ENCODE measurements at regions of chr2 and their contacts with region 1.

Region 1: DNA sequence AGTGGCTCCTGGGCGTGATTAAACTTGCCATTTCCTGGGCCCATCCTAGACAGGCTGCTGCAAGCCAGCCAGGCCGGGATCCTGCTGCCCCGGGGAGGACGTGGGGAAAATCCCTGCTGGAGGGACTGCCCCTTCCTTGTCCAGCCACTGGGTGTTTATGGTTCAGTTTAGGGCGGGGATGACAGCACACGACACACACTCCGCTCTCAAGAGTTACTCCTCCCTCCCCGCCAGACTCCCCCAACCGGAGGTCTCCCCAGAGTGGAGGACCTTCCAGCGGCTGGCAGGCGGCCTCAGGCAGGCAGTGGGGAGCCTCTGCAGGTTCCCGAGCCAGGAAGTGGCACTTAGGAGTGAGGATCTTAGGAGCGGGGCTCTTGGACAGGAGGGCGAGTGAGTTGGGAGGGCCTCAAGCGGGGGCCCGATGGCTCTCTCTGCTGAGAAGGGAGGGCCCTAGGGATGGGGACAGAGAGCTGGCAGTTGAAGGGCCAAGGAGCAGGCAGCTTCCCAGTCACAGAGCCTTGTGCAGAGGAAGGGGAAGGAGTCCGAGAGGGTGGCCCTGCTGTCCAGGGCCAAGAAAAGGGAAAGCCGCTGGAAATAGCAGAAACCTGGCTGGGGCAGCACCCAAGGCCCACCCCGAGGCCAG is 5.7 kb upstream of the GPR35 start:
- DNase-seq: peak in 1 of 9 donors; percentile 3
- ATAC-seq: no peak
- H3K4me3 ChIP-seq: no peak overlapping the region
- H3K4me3 Mint-ChIP-seq: peak overlapping the region in 3 of 10 donors; percentile 21 to 48 (median 30)
- H3K27ac ChIP-seq: no peak overlapping the region
- H3K27ac Mint-ChIP-seq: peak overlapping the region in 7 of 9 donors; percentile 32 to 82 (median 66)
- H3K4me1 ChIP-seq: peaks cover 38 to 39% of the 10 kb centered on the region in 2 donors
- H3K4me1 Mint-ChIP-seq: peaks cover 11 to 56% (median 40%) of the 10 kb centered on the region in 7 donors
- H3K27me3 ChIP-seq: no peaks in the 10 kb centered on the region
- H3K27me3 Mint-ChIP-seq: no peaks in the 10 kb centered on the region

Region 2: DNA sequence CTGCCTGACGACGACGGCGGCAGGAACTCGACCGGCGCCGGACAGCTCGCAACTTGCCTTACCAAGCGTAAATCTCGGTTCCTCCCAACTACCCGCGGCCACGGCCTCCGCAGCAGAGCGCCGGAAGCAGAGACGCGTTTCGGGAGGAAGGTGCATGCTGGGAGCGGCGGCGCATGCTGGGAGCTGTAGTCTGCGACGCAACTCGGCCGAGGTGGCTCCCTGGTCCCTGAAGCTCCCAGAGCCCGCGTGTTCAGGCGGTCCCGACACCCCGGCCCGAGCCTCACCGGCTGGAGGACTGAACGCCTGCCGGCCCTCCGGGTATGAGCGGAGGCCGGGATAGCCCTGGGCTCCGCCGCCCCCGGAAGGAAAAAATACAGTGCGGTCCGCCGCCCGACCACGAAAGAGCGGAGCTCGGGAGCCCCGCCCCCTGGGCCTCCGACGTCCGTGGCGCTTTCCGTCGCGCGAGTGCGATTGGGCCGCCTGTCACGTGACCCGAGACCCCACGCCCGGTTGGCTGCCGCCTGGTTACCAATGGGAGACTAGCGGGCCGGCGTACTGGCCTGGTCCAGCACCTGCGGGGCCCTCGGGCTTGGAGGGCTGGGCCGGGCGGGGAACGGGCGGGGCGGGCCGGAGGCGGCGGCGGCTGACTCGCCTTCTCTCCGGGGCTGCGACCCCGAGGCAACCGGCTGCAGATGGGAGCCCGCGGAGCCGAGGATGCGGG is 33.3 kb before region 1 on chr2 and contains the start of gene CAPN10:
- CTCF ChIA-PET with region 1: interaction called, 6 read pairs
- POLR2A ChIA-PET with region 1: interaction called, 27 read pairs
- intact Hi-C with region 1: loop called (anchors 1 kb)
- DNase-seq: peak; percentile 93 to 98 (median 97)
- ATAC-seq: peak; percentile 92
- H3K4me3 ChIP-seq: peak within 1 kb of the TSS; percentile 89
- H3K4me3 Mint-ChIP-seq: peak within 1 kb of the TSS; percentile 82 to 97 (median 94)
- H3K27ac ChIP-seq: peak within 1 kb of the TSS; percentile 94
- H3K27ac Mint-ChIP-seq: peak within 1 kb of the TSS; percentile 90 to 97 (median 92)
- H3K4me1 ChIP-seq: peaks cover 30 to 33% of the 10 kb centered on the region in 2 donors
- H3K4me1 Mint-ChIP-seq: peaks cover 31 to 69% (median 56%) of the 10 kb centered on the region in 7 donors
- H3K27me3 ChIP-seq: no peaks in the 10 kb centered on the region
- H3K27me3 Mint-ChIP-seq: no peaks in the 10 kb centered on the region
- total RNA-seq, gene CAPN10: 54.1 to 74.8 (median 64.5) TPM

Region 3: GRCh38 chr2:240655931-240656886 is 36.6 kb after region 1 on chr2:
- CTCF ChIA-PET with region 1: no interaction called
- POLR2A ChIA-PET with region 1: no interaction called
- intact Hi-C with region 1: loop called in 1 of 2 experiments (anchors 2 kb)
- DNase-seq: no peak
- ATAC-seq: peak; percentile 61
- H3K4me3 ChIP-seq: no peak overlapping the region
- H3K4me3 Mint-ChIP-seq: no peak overlapping the region
- H3K27ac ChIP-seq: no peak overlapping the region
- H3K27ac Mint-ChIP-seq: no peak overlapping the region
- H3K4me1 ChIP-seq: peaks cover 0 to 5% of the 10 kb centered on the region in 2 donors
- H3K4me1 Mint-ChIP-seq: peaks cover 0 to 12% (median 0%) of the 10 kb centered on the region in 7 donors
- H3K27me3 ChIP-seq: no peaks in the 10 kb centered on the region
- H3K27me3 Mint-ChIP-seq: peaks cover 4 to 71% (median 13%) of the 10 kb centered on the region in 5 donors

Region 4: DNA sequence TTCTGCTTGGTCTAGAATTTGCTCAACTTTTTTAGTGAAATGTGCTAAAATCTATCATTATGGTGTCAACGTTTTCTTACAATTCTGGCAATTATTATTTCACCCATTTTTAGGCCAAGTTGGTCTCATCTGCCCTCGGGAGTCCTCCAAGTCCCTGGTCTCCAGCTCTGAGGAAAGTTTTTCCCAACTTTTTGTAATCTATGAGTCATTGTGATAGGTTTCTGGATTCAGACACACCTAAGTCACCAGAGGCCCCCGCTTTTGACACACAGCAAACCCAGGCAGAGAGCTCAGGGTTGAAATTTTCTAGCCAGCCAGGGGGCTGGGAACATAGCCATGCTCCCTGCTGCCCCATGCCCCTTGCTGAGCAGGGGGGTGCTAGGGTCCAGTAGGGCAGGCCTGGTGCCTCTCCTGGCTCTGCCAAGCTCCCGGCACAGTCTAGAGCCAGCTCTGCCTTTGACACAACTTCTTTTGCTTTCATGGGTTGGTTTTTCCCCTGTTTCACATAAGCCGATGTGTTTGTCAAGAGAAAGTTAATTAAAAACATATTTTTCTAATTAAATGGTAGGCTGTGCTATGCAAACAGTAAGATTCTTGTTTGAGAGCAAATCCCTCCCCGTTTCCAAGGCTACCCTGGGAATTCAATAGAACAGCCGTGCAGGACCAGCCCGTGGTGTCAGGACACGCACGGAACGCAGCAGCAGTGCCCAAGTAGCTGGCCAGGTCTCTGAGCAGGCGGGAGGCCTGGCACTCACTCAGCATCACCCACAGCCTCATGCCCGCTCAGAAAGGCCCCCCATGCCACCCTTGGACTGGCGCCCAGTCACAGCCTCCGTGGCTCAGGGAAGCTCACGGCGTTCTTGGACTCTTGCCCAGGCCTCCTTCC is 353.3 kb after region 1 on chr2:
- CTCF ChIA-PET with region 1: no interaction called
- POLR2A ChIA-PET with region 1: no interaction called
- intact Hi-C with region 1: no loop called
- DNase-seq: no peak
- ATAC-seq: no peak
- H3K4me3 ChIP-seq: no peak overlapping the region
- H3K4me3 Mint-ChIP-seq: no peak overlapping the region
- H3K27ac ChIP-seq: no peak overlapping the region
- H3K27ac Mint-ChIP-seq: no peak overlapping the region
- H3K4me1 ChIP-seq: no peaks in the 10 kb centered on the region
- H3K4me1 Mint-ChIP-seq: peaks cover 6 to 25% (median 8%) of the 10 kb centered on the region in 7 donors
- H3K27me3 ChIP-seq: peaks cover 0 to 3% of the 10 kb centered on the region in 2 donors
- H3K27me3 Mint-ChIP-seq: peaks cover 0 to 18% (median 12%) of the 10 kb centered on the region in 5 donors

Measured in naive thymus-derived CD4-positive, alpha-beta T cell (primary cell).